PC-9 (cell line): ENCODE measurements at regions of chr9 and their contacts with region 1.

Region 1: GRCh38 chr9:137316012-137316976 is 14.2 kb upstream of the NRARP start:
- DNase-seq: peak in 1 of 2 experiments; percentile 71
- H3K4me3 ChIP-seq: peak overlapping the region; percentile 53; the same call in 1 of the 2 replicates
- H3K27ac ChIP-seq: no peak overlapping the region
- H3K4me1 ChIP-seq: peaks cover 34% of the 10 kb centered on the region
- H3K27me3 ChIP-seq: no peaks in the 10 kb centered on the region
- CTCF ChIP-seq: no peak

Region 2: DNA sequence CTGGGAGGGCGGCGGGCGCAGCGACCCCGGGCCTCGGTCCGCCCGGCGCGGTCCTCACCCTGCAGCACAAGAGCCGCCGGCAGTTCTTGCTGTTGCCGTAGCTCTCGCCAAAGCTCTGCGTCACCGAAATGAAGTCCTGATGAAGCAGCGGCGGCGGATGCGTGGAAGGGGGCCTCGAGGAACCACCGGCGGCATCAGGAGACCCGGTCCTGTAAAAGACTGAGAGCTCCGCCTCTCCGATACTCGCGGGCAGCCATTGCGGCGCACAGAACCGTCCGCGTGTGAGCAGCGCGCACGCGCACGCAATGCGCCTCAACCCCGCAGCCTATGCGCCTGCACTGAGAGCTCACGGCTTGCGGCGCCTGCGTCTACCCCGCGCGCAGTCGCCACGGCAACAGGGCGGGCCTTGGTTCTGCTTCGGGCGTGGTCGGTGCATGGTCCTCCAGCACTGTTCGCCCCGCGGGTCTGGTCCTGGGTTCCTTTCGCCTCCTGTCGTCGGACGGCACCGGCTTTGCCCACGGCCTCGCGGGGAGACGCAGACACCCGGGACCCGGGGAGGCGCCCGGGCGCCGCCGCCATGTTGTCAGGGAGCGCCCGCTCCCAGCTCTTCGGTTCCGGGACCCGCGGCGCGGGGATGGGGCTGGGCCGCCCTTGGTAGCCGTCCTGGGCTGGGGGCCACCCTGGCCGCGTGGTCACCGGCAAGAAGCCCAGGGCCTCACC is 186.7 kb before region 1 on chr9:
- CTCF ChIA-PET with region 1: no interaction called
- POLR2A ChIA-PET with region 1: no interaction called
- intact Hi-C with region 1: no loop called
- DNase-seq: peak; percentile 76 to 93
- H3K4me3 ChIP-seq: peak overlapping the region; percentile 86
- H3K27ac ChIP-seq: peak overlapping the region; percentile 54
- H3K4me1 ChIP-seq: peaks cover 28% of the 10 kb centered on the region
- H3K27me3 ChIP-seq: no peaks in the 10 kb centered on the region
- CTCF ChIP-seq: no peak

Region 3: DNA sequence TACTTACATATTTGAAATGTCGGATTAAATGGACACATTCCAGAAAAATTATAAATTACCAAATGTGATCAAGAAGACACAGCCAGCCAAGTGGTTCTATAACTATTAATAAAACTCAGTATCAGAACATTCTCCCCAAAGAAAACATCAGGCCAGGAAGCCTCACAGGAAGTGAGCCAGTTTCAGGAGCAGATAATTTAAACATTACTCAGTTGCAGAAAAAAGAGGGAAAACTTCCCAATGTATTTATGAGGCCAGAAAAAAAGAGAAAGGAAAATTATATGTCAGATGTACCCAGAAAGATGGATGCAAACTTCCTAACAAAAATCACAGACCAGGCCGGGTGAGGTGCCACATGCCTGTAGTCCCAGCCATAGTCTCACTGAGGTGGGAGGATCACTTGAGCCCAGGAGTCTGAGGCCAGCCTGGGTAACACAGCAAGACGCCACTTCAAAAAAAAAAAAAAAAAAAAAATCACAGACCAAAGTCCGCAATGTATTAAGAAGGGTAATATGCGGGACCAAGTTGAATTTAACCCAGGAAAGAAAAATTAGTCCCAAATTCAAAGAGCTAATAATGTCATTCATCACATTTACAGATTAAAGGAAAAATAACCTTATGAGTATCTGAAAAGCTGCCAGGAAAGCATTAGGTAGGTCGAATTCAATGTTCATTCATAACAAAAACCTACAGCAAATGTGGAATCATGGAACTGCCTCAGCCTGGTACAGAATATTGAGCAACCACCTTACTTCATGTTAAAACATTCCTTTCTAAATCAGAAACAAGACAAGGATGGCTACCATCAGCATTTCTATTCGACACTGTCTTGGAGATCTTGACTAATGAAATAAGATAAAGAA is 23.0 kb after region 1 on chr9:
- CTCF ChIA-PET with region 1: no interaction called
- POLR2A ChIA-PET with region 1: interaction called, 20 read pairs
- intact Hi-C with region 1: no loop called
- DNase-seq: no peak
- H3K4me3 ChIP-seq: no peak overlapping the region
- H3K27ac ChIP-seq: no peak overlapping the region
- H3K4me1 ChIP-seq: no peaks in the 10 kb centered on the region
- H3K27me3 ChIP-seq: peaks cover 58% of the 10 kb centered on the region
- CTCF ChIP-seq: no peak